Aorta (tissue), 5 donors: ENCODE measurements at regions of chr17 and their contacts with region 1.

Region 1: DNA sequence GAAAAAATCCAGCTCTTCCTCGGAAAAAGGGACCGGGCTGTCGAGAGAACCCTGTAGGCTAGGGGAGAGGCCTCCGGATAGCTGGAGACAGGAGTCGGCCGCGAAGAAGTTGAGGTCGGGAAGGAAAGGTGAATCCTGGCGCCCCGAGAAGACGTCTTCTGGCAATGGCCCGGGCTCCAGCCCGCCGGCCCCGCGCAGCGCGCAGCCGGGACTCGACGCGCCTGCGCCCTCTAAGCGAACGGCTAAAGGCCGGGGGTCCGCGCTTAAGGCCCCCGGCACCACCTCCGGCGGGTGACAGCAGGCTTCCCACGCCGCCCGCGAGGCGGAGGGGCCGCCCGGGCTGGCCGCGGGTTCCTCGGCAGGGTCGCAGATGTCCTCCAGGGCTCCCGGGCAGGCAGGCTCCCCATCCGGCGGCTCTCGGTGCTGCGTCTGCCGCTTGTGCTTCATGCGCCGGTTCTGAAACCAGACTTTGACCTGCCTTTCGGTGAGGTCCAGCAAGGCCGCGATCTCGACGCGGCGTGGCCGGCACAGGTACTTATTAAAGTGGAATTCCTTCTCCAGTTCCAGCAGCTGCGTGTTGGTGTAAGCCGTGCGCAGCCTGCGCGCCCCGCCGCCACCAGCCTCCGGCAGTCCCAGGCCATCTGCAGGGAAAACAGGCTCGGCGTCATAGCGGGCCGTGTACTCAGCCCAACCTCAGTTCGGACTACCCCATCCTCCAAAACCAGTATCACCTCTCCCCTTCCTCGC is 1.6 kb downstream of the HOXB2 start:
- DNase-seq: peak in 1 of 2 donors; percentile 85
- ATAC-seq: peak; percentile 40
- H3K4me3 ChIP-seq: peak overlapping the region; percentile 71 to 94
- H3K27ac ChIP-seq: peak overlapping the region; percentile 80 to 82
- H3K4me1 ChIP-seq: peaks cover 0 to 4% of the 10 kb centered on the region in 2 donors
- H3K27me3 ChIP-seq: no peaks in the 10 kb centered on the region

Region 2: GRCh38 chr17:48413613-48414405 is 129.5 kb before region 1 on chr17:
- intact Hi-C with region 1: no loop called
- DNase-seq: no peak
- ATAC-seq: no peak
- H3K4me3 ChIP-seq: no peak overlapping the region
- H3K27ac ChIP-seq: no peak overlapping the region
- H3K4me1 ChIP-seq: no peaks in the 10 kb centered on the region
- H3K27me3 ChIP-seq: no peaks in the 10 kb centered on the region

Region 3: DNA sequence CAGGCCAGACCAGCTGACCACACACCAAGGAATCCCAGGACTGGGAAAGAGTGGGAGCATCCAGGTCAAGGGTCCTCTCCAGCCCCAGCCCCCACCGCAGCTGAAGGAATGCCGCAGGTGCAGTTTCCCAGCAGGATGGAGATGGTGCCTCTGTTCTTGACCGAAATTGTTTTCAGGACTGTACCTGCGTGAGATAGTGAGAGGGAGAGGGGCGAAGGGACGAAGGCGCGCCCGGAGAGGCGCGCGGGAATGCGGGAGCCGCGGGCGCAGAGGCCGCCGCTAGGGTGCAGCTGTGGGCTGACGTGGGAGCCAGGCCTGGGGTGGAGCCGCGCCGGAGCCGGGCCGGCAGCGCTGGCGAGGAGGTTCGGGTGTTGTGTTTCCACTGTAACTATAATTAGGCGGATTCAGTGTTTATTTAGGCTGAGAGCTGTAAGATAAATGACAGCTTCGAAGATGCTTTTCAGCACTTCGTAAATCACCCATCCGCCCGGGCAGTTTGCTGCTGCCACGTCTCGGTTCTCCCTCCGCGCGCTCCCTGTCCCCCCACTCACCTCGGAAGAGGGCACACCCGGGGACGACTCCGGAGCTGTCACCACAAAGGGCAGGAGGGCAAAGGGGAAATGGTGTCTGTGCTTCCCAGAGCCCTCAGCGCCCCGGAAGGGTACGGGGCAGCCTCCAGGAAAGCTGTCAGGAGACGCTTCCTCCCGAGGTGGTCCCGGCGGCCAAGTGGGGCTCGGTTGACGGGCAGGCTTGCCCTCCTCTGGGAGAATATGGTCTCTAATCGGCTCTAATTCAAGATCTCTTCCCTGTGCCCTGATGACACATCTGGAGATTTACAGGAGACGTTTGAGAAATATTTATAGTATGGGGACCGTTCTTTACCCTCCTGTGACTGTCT is 50.6 kb before region 1 on chr17:
- intact Hi-C with region 1: loop called in 1 of 2 experiments (anchors 5 kb)
- DNase-seq: peak; percentile 82 to 94
- ATAC-seq: peak; percentile 96
- H3K4me3 ChIP-seq: no peak overlapping the region
- H3K27ac ChIP-seq: no peak overlapping the region
- H3K4me1 ChIP-seq: no peaks in the 10 kb centered on the region
- H3K27me3 ChIP-seq: no peaks in the 10 kb centered on the region

Region 4: DNA sequence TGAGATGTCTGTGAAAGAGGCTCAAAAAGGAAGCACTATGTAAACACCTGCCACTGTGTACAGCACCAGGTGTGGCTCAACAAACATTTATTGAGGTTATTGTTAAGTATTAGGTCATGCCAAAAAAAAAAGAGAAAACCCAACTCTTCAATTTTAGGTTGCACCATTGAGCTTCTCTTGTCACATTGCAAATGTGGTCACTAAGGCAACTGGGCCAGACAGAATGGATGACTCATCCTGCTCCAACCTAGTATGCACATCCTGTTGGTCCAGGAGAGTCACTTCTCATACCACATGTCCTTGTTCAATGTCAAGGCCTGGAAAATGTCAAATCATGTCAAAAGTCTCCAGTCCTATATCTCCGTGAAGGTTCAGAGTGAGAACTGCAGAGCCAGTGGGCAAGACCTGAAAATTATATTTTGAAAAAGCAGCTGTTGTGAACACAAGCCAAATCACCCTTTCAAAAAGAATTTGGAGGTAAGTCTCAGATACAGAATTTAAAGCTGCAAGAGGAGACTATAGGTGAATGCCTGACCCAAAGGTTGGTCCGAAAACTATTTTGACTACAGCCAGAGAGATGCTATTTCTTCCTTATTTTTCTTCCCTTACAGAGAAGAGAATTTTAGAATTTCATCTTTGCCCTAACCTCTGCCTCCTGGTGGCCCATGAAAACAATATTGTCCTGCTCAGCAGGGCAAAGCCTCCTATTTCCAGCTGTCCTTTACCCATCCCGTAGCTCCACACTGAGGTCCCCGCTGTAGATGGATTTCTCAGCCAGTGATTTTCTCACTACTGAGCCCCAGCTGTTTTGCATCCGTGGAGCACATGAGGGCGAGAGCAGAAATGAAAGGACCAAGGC is 37.3 kb before region 1 on chr17:
- intact Hi-C with region 1: loop called in 1 of 2 experiments (anchors 5 kb)
- DNase-seq: peak in 1 of 2 donors; percentile 60
- ATAC-seq: peak; percentile 66
- H3K4me3 ChIP-seq: no peak overlapping the region
- H3K27ac ChIP-seq: no peak overlapping the region
- H3K4me1 ChIP-seq: no peaks in the 10 kb centered on the region
- H3K27me3 ChIP-seq: no peaks in the 10 kb centered on the region

Region 5: GRCh38 chr17:48577946-48578615 is 34.8 kb after region 1 on chr17 and contains the start of gene HOXB4:
- intact Hi-C with region 1: loop called in 1 of 2 experiments (anchors 1 kb)
- DNase-seq: peak; percentile 90 to 92
- ATAC-seq: peak; percentile 71
- H3K4me3 ChIP-seq: peak within 1 kb of the TSS; percentile 40 to 68
- H3K27ac ChIP-seq: peak within 1 kb of the TSS; percentile 49 to 88
- H3K4me1 ChIP-seq: peaks cover 0 to 7% of the 10 kb centered on the region in 2 donors
- H3K27me3 ChIP-seq: no peaks in the 10 kb centered on the region
- total RNA-seq, gene HOXB4: 6.6 to 17.9 TPM

Region 6: DNA sequence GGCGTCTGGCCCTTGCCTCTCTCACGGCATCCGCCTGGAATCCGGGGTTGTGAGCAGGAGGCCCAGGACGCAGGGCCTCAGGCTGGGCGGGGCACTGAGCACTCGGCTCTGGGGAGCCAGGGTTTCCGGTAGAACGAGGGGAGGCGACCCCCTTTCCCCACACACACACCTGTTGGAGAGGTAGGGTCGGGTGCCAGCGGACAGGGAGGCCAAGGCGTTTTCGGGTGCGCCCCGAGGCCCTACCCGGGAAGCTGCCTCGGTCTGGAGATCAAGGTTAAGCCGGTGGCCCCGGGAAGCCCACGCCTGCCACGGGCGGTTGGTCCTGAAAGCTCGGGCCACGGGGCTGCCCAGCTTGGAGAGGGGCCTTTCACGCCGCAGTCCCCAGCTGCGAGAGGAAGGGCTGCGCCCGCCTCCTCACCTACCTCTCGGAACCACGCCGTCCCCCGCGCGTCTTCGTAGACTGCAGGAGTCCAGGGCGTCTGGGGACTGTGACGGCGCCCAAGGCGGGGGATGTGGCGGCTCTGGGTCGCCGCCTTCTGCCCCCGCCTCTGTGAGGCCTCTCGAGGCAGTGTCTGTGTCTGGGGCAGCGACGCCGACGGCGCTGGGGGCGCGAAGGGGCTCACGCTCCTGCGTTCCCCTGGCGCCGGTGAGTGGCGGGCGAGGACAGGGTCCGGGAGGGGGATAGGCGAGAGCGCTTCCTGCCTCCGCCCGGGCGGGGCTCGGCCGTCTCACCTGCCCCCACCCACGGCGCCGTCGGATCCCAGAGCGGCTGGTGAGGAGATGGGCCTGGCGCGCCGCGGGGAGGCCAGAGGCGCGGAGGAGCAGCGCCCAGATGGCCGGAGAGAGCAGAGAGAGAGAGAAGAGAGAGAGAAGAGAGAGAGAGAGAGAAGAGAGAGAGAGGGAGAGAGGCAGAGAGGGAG is 103.2 kb after region 1 on chr17:
- intact Hi-C with region 1: no loop called
- DNase-seq: no peak
- ATAC-seq: no peak
- H3K4me3 ChIP-seq: no peak overlapping the region
- H3K27ac ChIP-seq: no peak overlapping the region
- H3K4me1 ChIP-seq: no peaks in the 10 kb centered on the region
- H3K27me3 ChIP-seq: no peaks in the 10 kb centered on the region

Region 7: GRCh38 chr17:48850792-48851323 is 307.6 kb after region 1 on chr17:
- intact Hi-C with region 1: no loop called
- DNase-seq: no peak
- ATAC-seq: no peak
- H3K4me3 ChIP-seq: no peak overlapping the region
- H3K27ac ChIP-seq: no peak overlapping the region
- H3K4me1 ChIP-seq: no peaks in the 10 kb centered on the region
- H3K27me3 ChIP-seq: no peaks in the 10 kb centered on the region